ENCODE measurements at regions of chr6 and their contacts with region 1.

Region 1: GRCh38 chr6:52263709-52264540 is 19.6 kb upstream of the IL17F start:
- DNase-seq: peak; percentile 70
- H3K4me3 ChIP-seq: no peak overlapping the region
- H3K27ac ChIP-seq: no peak overlapping the region
- H3K4me1 ChIP-seq: peaks cover 6% of the 10 kb centered on the region
- H3K27me3 ChIP-seq: no peaks in the 10 kb centered on the region
- CTCF ChIP-seq: peak; percentile 91 to 93
- POLR2A ChIP-seq: no peak

Region 2: DNA sequence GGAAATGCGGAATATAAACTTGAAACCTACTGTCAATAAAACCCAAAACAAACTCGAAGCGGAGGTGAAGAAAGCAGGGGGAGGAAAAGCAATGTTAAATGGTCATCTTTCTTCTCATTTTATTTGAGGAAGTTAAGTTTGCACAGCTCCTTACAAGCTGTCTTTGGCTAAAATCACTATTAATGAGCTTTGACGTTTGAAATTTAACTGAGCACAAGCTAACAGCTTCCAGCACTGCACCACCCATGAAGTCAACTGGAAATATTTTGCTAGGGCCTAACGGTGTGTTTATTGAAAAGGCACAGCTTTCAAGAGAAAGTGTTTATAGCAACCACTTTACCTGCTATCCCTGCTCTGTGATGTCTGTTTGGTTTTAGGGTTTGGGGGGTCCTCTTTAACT is 280.4 kb before region 1 on chr6:
- CTCF ChIA-PET with region 1: no interaction called
- POLR2A ChIA-PET with region 1: no interaction called
- dilution Hi-C with region 1: no loop called
- intact Hi-C with region 1: no loop called
- DNase-seq: no peak
- H3K4me3 ChIP-seq: no peak overlapping the region
- H3K27ac ChIP-seq: no peak overlapping the region
- H3K4me1 ChIP-seq: no peaks in the 10 kb centered on the region
- H3K27me3 ChIP-seq: no peaks in the 10 kb centered on the region
- CTCF ChIP-seq: no peak
- POLR2A ChIP-seq: no peak

Region 3: DNA sequence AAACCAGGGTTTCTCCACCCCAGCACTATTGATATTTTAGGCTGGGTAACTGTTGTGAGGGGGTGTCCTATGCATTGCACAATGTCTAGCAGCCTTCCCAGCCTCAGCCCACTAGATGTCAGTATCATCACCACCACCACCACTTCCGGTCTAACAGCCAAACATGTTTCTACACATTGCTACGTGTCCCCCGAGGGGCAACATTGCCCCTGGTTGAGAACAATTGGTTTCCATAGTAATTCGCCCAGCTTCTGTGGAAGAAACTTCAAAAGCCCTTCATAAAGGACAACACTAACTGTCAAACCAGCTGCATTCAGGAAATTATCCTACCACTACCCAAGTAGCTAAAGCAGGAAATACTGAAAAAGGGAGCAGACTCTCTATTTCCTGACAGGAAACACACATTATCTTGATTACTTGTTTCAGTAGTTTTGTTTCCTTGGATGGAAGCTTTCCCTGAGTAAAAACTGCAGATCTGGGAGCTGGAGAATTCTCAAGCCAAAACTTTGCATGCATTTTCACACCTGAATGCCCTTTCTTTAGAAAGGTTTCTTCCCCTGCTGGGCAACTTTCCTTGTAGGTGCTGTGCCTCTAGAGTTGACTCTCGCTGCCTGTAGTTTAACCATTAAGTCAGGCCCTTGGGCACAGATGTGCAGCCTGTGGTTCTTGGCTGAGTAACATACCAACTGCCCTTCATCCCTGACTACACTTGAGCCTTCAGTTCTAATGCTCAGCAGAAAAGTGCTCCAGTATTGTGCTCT is 200.2 kb before region 1 on chr6:
- CTCF ChIA-PET with region 1: interaction called, 5 read pairs
- POLR2A ChIA-PET with region 1: no interaction called
- dilution Hi-C with region 1: no loop called
- intact Hi-C with region 1: loop called (anchors 1 kb)
- DNase-seq: peak; percentile 17
- H3K4me3 ChIP-seq: no peak overlapping the region
- H3K27ac ChIP-seq: no peak overlapping the region
- H3K4me1 ChIP-seq: peaks cover 7% of the 10 kb centered on the region
- H3K27me3 ChIP-seq: no peaks in the 10 kb centered on the region
- CTCF ChIP-seq: peak; percentile 33 to 52
- POLR2A ChIP-seq: no peak

Region 4: GRCh38 chr6:52162940-52163908 is 100.7 kb before region 1 on chr6:
- CTCF ChIA-PET with region 1: interaction called, 47 read pairs
- POLR2A ChIA-PET with region 1: no interaction called
- dilution Hi-C with region 1: no loop called
- intact Hi-C with region 1: loop called (anchors 1 kb)
- DNase-seq: peak; percentile 16
- H3K4me3 ChIP-seq: no peak overlapping the region
- H3K27ac ChIP-seq: no peak overlapping the region
- H3K4me1 ChIP-seq: no peaks in the 10 kb centered on the region
- H3K27me3 ChIP-seq: peaks cover 2 to 7% of the 10 kb centered on the region in 2 experiments
- CTCF ChIP-seq: peak; percentile 12 to 24
- POLR2A ChIP-seq: no peak

Region 5: DNA sequence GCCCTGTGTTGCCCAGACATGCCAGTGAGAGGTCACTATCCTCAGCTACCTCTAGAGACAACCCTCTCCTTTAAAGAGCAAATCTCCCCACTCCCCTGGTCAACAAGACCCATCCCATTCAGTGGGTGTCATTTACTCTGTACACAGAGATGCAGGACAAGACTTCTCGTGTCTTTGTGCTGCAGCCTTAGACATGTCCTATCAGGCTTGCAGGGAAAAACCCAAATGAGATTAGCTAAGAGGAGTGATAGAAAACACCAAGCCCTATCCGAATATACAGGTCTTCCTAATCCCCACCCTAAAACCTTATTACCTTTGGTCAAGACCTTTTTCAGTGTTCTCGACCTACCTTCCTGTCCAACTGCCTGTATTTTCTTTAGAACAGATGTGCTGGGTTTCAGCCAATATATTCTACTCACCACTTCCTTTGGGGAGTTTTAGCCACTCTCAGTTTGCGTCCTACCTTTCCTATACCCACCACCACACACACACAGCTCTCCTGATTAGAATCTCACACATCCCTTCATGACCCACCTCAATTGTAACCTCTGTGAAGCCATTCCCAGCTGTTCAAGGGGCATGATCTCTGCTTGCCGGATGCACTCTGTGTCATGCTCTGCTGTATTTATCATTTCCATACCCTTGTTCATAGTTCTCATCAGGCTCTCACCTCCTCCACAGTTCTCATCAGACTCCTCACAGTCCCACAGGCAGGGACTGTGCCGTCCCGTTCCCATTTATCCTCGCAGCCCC is 273.3 kb after region 1 on chr6:
- CTCF ChIA-PET with region 1: no interaction called
- POLR2A ChIA-PET with region 1: no interaction called
- dilution Hi-C with region 1: no loop called
- intact Hi-C with region 1: no loop called
- DNase-seq: peak; percentile 78
- H3K4me3 ChIP-seq: no peak overlapping the region
- H3K27ac ChIP-seq: peak overlapping the region; percentile 74
- H3K4me1 ChIP-seq: peaks cover 83% of the 10 kb centered on the region
- H3K27me3 ChIP-seq: no peaks in the 10 kb centered on the region
- CTCF ChIP-seq: no peak
- POLR2A ChIP-seq: peak; percentile 9